ENCODE measurements at regions of chr3 and their contacts with region 1.

Region 1: DNA sequence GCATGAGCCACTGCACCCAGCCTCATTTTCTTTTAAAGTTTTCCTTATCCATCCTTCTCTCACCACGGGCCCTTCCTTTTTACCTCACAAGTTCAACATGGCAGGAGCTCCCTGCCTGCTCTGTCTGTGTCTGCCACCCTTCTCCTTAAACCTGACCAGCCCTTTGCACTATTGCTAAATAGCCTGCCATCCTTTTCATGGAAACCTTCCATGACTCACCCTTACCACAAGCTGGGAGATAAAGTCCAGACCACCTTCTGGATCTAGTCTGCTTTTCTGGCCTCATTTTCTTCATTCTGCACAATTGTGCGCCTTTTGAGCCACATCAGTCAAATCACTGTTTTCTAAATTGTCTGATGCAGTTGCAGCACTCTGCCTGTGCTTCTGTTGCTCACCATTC is 8.9 kb downstream of the PARP14 start:
- DNase-seq: no peak
- ATAC-seq: no peak

Region 2: GRCh38 chr3:122295266-122296062 is 394.1 kb before region 1 on chr3:
- intact Hi-C with region 1: no loop called
- DNase-seq: no peak
- ATAC-seq: peak; percentile 69

Region 3: GRCh38 chr3:122555275-122556071 is 134.1 kb before region 1 on chr3:
- intact Hi-C with region 1: loop called (anchors 5 kb)
- DNase-seq: no peak
- ATAC-seq: peak; percentile 74

Region 4: GRCh38 chr3:122824465-122825381 is 135.1 kb after region 1 on chr3:
- intact Hi-C with region 1: no loop called
- DNase-seq: no peak
- ATAC-seq: no peak

Region 5: DNA sequence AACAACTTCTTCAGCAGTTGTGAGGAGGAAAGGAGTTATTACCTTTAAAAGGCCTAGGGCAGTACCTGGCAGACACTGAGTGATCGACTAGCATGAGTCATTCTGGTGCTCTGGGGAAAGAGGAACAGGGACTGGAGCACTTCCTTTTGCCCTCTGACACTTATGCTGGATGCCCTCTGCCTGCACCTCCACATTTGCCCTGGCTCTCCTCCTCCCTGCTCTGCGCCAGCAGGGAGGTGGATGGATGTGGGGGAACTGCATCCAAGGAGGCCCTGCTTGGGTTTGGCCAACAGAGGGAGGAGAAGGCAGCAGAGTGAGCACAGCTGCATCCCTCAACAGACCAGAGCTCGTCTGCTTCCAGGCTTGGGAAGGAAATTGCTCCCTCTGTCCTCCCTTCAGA is 262.9 kb after region 1 on chr3:
- intact Hi-C with region 1: no loop called
- DNase-seq: no peak
- ATAC-seq: peak; percentile 13